ENCODE measurements at regions of chr22 and their contacts with region 1.

Region 1: DNA sequence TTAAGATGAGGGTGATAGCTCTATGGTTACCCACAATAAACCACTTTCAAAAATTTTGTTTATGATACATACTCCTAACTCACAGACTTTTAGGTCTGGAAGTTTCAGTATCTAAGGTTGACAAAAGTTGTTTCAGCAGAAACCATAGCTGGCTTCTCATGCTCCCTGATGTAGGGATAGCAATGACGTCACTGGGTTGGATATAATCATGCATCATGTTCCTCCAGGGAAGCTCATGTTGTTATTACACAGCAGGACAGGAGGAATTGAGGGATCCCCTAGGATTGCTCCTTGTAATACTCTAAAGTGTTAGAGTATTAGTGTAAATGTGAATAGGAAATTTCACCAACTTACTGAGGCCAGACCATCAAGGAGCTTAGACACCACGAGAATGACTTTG is 23.6 kb downstream of the APOL3 start:
- DNase-seq: no peak
- H3K4me3 ChIP-seq: no peak overlapping the region
- H3K27ac ChIP-seq: no peak overlapping the region
- H3K4me1 ChIP-seq: no peaks in the 10 kb centered on the region
- H3K27me3 ChIP-seq: peaks cover 25% of the 10 kb centered on the region
- CTCF ChIP-seq: no peak

Region 2: GRCh38 chr22:36088292-36088691 is 48.7 kb before region 1 on chr22:
- CTCF ChIA-PET with region 1: no interaction called
- POLR2A ChIA-PET with region 1: interaction called, 16 read pairs
- intact Hi-C with region 1: no loop called
- DNase-seq: peak in 1 of 2 experiments; percentile 6
- H3K4me3 ChIP-seq: no peak overlapping the region
- H3K27ac ChIP-seq: no peak overlapping the region
- H3K4me1 ChIP-seq: peaks cover 9% of the 10 kb centered on the region
- H3K27me3 ChIP-seq: no peaks in the 10 kb centered on the region
- CTCF ChIP-seq: no peak

Region 3: DNA sequence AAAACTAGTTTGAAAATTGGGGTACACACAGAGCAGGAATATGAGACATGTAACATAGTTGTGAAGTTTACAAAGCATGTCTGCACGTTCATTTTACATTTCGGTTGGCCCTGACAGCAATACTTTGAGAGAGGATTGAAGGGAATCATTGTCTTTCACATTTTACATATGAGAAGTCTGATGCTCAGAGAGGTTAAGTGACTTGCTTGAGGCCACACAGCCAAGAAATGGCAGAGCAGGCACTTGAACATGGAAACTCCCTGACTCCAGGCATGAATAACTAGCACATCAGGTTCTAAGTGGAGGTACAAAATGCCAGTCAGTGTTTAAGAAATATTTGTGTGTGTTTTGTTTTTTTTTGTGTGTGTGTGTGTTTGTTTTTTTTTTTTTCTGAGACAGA is 30.1 kb before region 1 on chr22:
- CTCF ChIA-PET with region 1: interaction called, 13 read pairs
- POLR2A ChIA-PET with region 1: no interaction called
- intact Hi-C with region 1: no loop called
- DNase-seq: no peak
- H3K4me3 ChIP-seq: no peak overlapping the region
- H3K27ac ChIP-seq: no peak overlapping the region
- H3K4me1 ChIP-seq: no peaks in the 10 kb centered on the region
- H3K27me3 ChIP-seq: no peaks in the 10 kb centered on the region
- CTCF ChIP-seq: no peak

Measured in PC-9 (cell line).